CD8-positive, alpha-beta T cell (primary cell): ENCODE measurements at regions of chr19 and their contacts with region 1.

Region 1: GRCh38 chr19:12672744-12673143 is 6.1 kb downstream of the WDR83 start:
- DNase-seq: no peak
- ATAC-seq: no peak
- H3K4me3 ChIP-seq: no peak overlapping the region
- H3K4me3 Mint-ChIP-seq: no peak overlapping the region
- H3K27ac ChIP-seq: no peak overlapping the region
- H3K27ac Mint-ChIP-seq: no peak overlapping the region
- H3K4me1 ChIP-seq: peaks cover 29% of the 10 kb centered on the region
- H3K4me1 Mint-ChIP-seq: peaks cover 39% of the 10 kb centered on the region
- H3K27me3 ChIP-seq: no peaks in the 10 kb centered on the region
- H3K27me3 Mint-ChIP-seq: no peaks in the 10 kb centered on the region
- CTCF ChIP-seq: no peak

Region 2: GRCh38 chr19:12202250-12202649 is 470.5 kb before region 1 on chr19:
- CTCF ChIA-PET with region 1: no interaction called
- POLR2A ChIA-PET with region 1: no interaction called
- intact Hi-C with region 1: loop called (anchors 1 to 5 kb)
- DNase-seq: peak; percentile 28 to 77 (median 62)
- ATAC-seq: peak; percentile 83
- H3K4me3 ChIP-seq: no peak overlapping the region
- H3K4me3 Mint-ChIP-seq: no peak overlapping the region
- H3K27ac ChIP-seq: no peak overlapping the region
- H3K27ac Mint-ChIP-seq: no peak overlapping the region
- H3K4me1 ChIP-seq: peaks cover 8% of the 10 kb centered on the region
- H3K4me1 Mint-ChIP-seq: peaks cover 18% of the 10 kb centered on the region
- H3K27me3 ChIP-seq: no peaks in the 10 kb centered on the region
- H3K27me3 Mint-ChIP-seq: no peaks in the 10 kb centered on the region
- CTCF ChIP-seq: peak; percentile 36

Region 3: DNA sequence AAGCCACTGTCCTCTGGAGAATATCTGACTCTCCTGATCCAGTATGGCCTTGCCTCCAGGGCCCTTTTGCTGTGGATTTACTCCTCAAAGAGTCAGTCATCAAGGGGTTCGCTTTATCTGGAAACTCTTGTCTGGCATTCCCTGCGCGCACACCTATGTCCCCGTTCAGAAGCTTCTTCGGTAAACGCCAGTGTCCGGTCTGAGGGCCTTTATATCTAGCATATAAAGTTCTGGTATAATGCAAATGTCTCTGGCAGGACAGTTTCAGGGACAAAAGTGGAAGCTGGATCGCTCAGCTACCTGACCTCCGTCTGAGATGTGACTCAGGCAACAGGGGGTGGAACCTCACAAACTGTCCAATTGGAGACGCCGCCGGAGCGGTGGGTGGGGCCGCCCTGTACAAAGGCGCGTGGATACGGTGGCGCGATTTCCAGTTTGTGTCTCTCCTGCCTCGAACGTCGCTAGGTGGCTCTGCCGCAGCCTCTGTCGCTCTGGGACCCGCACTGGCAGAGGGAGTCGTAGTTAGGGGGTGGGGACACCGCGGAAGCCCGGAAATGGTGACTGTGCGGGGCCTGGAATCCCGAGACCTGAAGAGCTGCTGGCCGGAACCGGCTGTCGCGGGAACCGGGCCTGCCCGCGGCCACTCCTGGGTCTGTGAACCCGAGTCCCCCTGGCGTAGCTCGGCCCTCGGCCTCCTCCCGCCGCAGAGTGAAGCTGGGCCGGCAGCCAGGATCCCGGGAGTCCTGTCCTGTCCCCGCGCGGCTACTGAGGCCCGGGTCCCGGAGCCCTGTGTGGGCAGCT is 177.5 kb before region 1 on chr19:
- CTCF ChIA-PET with region 1: interaction called, 3 read pairs
- POLR2A ChIA-PET with region 1: no interaction called
- intact Hi-C with region 1: loop called in 1 of 2 experiments (anchors 1 kb)
- DNase-seq: peak; percentile 81 to 96 (median 93)
- ATAC-seq: peak; percentile 99
- H3K4me3 ChIP-seq: peak overlapping the region; percentile 53 to 64
- H3K4me3 Mint-ChIP-seq: peak overlapping the region; percentile 91
- H3K27ac ChIP-seq: peak overlapping the region; percentile 68 to 79
- H3K27ac Mint-ChIP-seq: peak overlapping the region; percentile 94
- H3K4me1 ChIP-seq: peaks cover 8% of the 10 kb centered on the region
- H3K4me1 Mint-ChIP-seq: peaks cover 18% of the 10 kb centered on the region
- H3K27me3 ChIP-seq: no peaks in the 10 kb centered on the region
- H3K27me3 Mint-ChIP-seq: no peaks in the 10 kb centered on the region
- CTCF ChIP-seq: peak; percentile 55

Region 4: GRCh38 chr19:12610540-12611360 is 62.0 kb before region 1 on chr19 and contains the starts of genes ZNF490 and ZNF791:
- CTCF ChIA-PET with region 1: interaction called, 13 read pairs
- POLR2A ChIA-PET with region 1: interaction called, 5 read pairs
- intact Hi-C with region 1: loop called (anchors 1 kb)
- DNase-seq: peak; percentile 93 to 98 (median 96)
- ATAC-seq: peak; percentile 86
- H3K4me3 ChIP-seq: peak within 1 kb of the TSS; percentile 83 to 85
- H3K4me3 Mint-ChIP-seq: peak within 1 kb of the TSS; percentile 100
- H3K27ac ChIP-seq: peak within 1 kb of the TSS; percentile 87 to 90
- H3K27ac Mint-ChIP-seq: peak within 1 kb of the TSS; percentile 100
- H3K4me1 ChIP-seq: peaks cover 44% of the 10 kb centered on the region
- H3K4me1 Mint-ChIP-seq: peaks cover 47% of the 10 kb centered on the region
- H3K27me3 ChIP-seq: no peaks in the 10 kb centered on the region
- H3K27me3 Mint-ChIP-seq: no peaks in the 10 kb centered on the region
- CTCF ChIP-seq: no peak
- total RNA-seq, gene ZNF490: 5.1 to 7.0 TPM
- total RNA-seq, gene ZNF791: 61.0 to 67.0 TPM

Region 5: DNA sequence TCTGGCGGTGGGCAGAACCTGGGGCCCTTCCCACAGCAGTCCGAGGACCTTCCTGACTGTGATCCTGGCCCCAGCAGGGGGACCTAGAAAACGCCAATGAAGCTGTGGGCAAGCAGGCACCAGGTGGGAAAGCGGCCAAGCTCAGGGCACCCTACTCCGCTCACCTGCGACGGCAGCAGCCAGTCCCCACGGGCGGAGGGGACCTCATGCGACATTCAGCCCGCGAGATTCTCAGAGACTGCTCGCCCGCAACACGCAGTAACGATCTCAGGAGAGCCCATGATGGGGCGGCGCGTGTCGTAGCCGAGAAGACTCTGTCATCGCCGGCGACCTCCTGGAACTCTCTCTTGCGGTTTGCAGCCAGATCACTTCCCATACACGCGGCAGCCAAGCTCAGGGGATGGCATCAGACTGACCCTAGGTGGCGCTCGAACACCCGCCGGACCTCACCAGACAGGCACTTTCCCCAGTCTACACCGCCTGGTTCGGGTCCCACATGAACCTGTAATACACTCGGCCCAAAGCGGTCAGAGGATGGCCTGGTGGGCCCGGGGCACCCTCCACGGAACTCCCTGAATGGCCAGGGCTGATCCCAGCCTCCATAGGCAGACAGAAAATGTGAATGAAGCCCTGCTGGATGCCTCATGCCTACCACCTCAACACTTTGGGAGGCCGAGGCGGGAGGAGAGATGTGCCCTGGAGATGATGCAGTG is 32.7 kb before region 1 on chr19:
- CTCF ChIA-PET with region 1: interaction called, 24 read pairs
- POLR2A ChIA-PET with region 1: no interaction called
- intact Hi-C with region 1: loop called (anchors 1 kb)
- DNase-seq: peak; percentile 64 to 89 (median 84)
- ATAC-seq: peak; percentile 81
- H3K4me3 ChIP-seq: peak overlapping the region; percentile 23 to 38
- H3K4me3 Mint-ChIP-seq: peak overlapping the region; percentile 79
- H3K27ac ChIP-seq: peak overlapping the region; percentile 8 to 15
- H3K27ac Mint-ChIP-seq: peak overlapping the region; percentile 70
- H3K4me1 ChIP-seq: peaks cover 18% of the 10 kb centered on the region
- H3K4me1 Mint-ChIP-seq: peaks cover 21% of the 10 kb centered on the region
- H3K27me3 ChIP-seq: no peaks in the 10 kb centered on the region
- H3K27me3 Mint-ChIP-seq: no peaks in the 10 kb centered on the region
- CTCF ChIP-seq: peak; percentile 68

Region 6: GRCh38 chr19:12867120-12868099 is 194.7 kb after region 1 on chr19:
- CTCF ChIA-PET with region 1: no interaction called
- POLR2A ChIA-PET with region 1: no interaction called
- intact Hi-C with region 1: no loop called
- DNase-seq: peak; percentile 39 to 84 (median 71)
- ATAC-seq: peak; percentile 86
- H3K4me3 ChIP-seq: peak overlapping the region; percentile 57 to 87
- H3K4me3 Mint-ChIP-seq: peak overlapping the region; percentile 86
- H3K27ac ChIP-seq: no peak overlapping the region
- H3K27ac Mint-ChIP-seq: peak overlapping the region; percentile 18
- H3K4me1 ChIP-seq: peaks cover 5% of the 10 kb centered on the region
- H3K4me1 Mint-ChIP-seq: peaks cover 9% of the 10 kb centered on the region
- H3K27me3 ChIP-seq: peaks cover 0 to 3% of the 10 kb centered on the region in 2 experiments
- H3K27me3 Mint-ChIP-seq: peaks cover 4% of the 10 kb centered on the region
- CTCF ChIP-seq: no peak